ENCODE measurements at regions of chr5 and their contacts with region 1.

Region 1: GRCh38 chr5:134586866-134587524 is 45.6 kb downstream of the SAR1B start:
- DNase-seq: peak; percentile 85
- H3K4me3 Mint-ChIP-seq: no peak overlapping the region
- H3K27ac Mint-ChIP-seq: peak overlapping the region; percentile 14
- H3K4me1 Mint-ChIP-seq: peaks cover 19% of the 10 kb centered on the region
- H3K27me3 Mint-ChIP-seq: no peaks in the 10 kb centered on the region

Region 2: DNA sequence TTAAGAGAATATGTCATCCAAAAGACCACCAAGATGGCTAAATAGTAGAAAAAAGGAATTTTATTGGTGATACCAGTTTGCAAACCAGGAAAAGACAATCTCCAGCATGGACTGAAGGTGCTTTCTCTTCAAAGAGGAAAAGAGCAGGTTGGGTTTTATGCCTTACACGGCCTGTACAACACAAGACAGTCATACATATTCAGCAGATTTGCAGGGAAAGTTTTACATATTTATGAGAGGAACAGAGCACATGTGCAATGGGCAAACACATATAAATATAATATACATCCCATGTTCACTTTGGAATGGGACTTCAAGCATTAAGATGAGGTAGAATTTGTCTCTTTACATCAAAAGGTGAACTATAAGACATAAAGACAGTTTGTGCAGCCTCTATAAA is 290.8 kb before region 1 on chr5:
- CTCF ChIA-PET with region 1: interaction called, 13 read pairs
- POLR2A ChIA-PET with region 1: no interaction called
- DNase-seq: no peak
- H3K4me3 Mint-ChIP-seq: no peak overlapping the region
- H3K27ac Mint-ChIP-seq: no peak overlapping the region
- H3K4me1 Mint-ChIP-seq: no peaks in the 10 kb centered on the region
- H3K27me3 Mint-ChIP-seq: peaks cover 10% of the 10 kb centered on the region

Region 3: DNA sequence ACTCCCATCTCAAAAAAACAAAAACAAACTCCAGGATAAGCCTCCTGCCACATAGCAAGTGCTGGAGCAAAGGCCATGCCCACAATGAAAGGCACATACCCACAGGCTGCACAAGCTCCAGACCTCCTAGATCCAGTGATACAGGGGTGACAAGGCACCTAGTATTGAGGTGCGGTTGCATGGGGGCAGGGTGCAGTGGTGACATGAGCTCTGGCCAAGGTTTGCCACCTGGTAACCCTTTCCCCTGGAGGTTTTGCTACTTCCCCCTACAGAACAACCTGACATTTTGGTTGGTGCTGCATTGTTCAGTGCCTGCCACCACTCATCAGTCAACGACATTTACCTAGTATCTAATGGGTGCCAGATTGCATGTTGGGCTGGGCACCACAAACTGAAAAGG is 189.8 kb before region 1 on chr5:
- CTCF ChIA-PET with region 1: interaction called, 10 read pairs
- POLR2A ChIA-PET with region 1: no interaction called
- DNase-seq: no peak
- H3K4me3 Mint-ChIP-seq: no peak overlapping the region
- H3K27ac Mint-ChIP-seq: no peak overlapping the region
- H3K4me1 Mint-ChIP-seq: no peaks in the 10 kb centered on the region
- H3K27me3 Mint-ChIP-seq: no peaks in the 10 kb centered on the region

Region 4: DNA sequence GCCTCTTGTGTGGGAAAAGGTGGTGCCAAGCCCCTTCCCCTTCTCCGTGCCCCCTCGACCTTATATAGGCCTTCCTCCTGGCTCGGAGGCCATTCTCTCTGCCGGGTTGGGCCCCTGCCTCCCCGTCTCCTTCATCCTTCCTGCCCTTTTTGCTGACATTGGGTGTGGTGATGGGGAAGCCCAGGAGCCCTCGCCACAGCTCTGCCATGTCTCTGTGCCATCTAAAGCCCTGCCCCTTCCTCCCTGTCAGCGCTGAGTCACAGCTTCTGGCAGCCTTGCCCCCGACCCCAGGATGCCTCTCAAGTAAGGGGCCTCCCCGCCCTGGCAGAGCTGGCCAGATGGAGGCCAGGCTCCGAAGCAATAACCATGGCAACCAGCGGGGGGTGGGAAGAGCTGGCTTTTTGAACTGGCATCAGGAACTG is 31.1 kb before region 1 on chr5:
- CTCF ChIA-PET with region 1: interaction called, 11 read pairs
- POLR2A ChIA-PET with region 1: no interaction called
- DNase-seq: peak; percentile 89
- H3K4me3 Mint-ChIP-seq: peak overlapping the region; percentile 35
- H3K27ac Mint-ChIP-seq: peak overlapping the region; percentile 90
- H3K4me1 Mint-ChIP-seq: peaks cover 33% of the 10 kb centered on the region
- H3K27me3 Mint-ChIP-seq: no peaks in the 10 kb centered on the region

Region 5: DNA sequence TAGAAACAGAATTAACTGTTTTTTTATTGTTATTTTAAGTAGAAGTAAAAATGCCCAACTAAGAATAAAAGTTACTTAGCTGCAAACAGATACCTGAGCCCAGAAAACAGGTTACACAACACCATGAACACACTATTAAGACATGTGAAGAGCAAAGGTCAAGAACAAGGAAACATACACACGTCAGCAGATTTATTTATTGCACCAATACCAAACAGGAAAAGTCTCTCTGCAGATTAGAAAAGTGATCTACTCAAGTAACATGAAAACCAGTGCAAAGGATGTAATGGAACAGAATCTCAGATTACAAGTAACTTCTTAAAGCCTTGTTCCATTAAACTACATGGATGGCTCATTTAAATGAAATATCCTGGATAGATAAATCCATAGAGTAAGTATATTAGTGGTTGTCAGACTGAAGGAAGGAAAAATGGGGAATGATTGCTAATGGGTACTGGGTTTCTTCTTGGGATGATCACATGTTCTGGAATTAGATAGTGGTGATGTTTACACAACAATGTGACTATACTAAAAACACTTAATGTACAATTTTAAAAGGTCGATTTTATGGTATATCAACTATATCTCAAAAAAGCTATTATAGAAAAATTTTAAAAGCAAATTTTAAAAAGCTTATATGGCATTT is 39.5 kb after region 1 on chr5:
- CTCF ChIA-PET with region 1: interaction called, 29 read pairs
- POLR2A ChIA-PET with region 1: no interaction called
- DNase-seq: no peak
- H3K4me3 Mint-ChIP-seq: no peak overlapping the region
- H3K27ac Mint-ChIP-seq: peak overlapping the region; percentile 27
- H3K4me1 Mint-ChIP-seq: peaks cover 25% of the 10 kb centered on the region
- H3K27me3 Mint-ChIP-seq: no peaks in the 10 kb centered on the region

Region 6: GRCh38 chr5:134904630-134905245 is 317.7 kb after region 1 on chr5 and contains the start of gene PCBD2:
- CTCF ChIA-PET with region 1: interaction called, 10 read pairs
- POLR2A ChIA-PET with region 1: interaction called, 7 read pairs
- DNase-seq: peak; percentile 94
- H3K4me3 Mint-ChIP-seq: peak within 1 kb of the TSS; percentile 95
- H3K27ac Mint-ChIP-seq: peak within 1 kb of the TSS; percentile 98
- H3K4me1 Mint-ChIP-seq: peaks cover 29% of the 10 kb centered on the region
- H3K27me3 Mint-ChIP-seq: no peaks in the 10 kb centered on the region
- total RNA-seq, gene PCBD2: 13.6 to 14.7 TPM

Region 7: DNA sequence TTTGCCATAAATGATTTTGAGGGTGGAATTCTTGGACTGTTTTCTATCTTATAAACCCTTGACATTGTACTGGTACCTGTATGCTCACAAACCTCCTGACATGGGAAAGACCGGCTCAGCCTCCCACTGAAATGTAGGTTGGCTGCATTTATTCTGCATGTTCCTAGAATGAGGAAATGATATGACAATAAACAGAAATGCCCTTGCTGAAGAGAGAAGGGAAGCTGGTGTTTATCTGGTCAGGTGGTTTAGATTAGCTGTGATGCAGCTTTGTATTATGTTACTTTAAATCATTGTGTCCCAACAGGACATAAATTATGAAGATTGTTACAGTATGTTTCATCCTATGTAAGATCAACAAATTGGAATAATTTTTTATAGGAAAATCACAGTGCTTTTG is 357.6 kb after region 1 on chr5:
- CTCF ChIA-PET with region 1: no interaction called
- POLR2A ChIA-PET with region 1: no interaction called
- DNase-seq: no peak
- H3K4me3 Mint-ChIP-seq: no peak overlapping the region
- H3K27ac Mint-ChIP-seq: no peak overlapping the region
- H3K4me1 Mint-ChIP-seq: peaks cover 1% of the 10 kb centered on the region
- H3K27me3 Mint-ChIP-seq: no peaks in the 10 kb centered on the region